Activated CD8-positive, alpha-beta T cell treated with anti-CD3 and anti-CD28 coated beads, Interleukin-2, amount 10 ng/mL, durations not matched to agents 7 days and 5 days (primary cell): ENCODE measurements at regions of chr1 and their contacts with region 1.

Region 1: DNA sequence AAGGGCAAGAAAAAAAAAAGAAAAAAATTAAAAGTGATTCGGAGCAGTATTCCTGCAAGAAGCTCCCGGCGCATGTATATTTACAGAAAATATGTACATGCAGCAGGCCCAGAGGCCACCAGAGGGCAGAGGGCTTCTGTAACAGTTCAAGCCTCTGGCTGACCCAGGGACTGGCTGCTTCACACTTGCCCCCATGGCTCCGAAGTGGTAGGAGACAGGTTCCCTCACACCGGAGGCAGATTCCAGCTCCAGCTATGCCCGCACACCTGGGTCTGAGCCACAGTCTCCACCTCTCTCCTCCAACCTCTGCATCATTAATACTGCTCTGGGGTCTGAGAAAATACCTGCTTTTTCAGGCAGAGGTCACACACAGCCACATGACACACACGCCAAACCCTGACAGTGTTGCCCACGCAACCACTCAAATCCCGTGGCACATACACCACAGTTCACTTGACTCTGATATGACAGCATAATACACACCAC is 2.2 kb upstream of the ARHGAP30 start:
- DNase-seq: peak; percentile 75
- ATAC-seq: no peak
- H3K4me3 Mint-ChIP-seq: no peak overlapping the region
- H3K27ac Mint-ChIP-seq: peak overlapping the region; percentile 26
- H3K4me1 Mint-ChIP-seq: peaks cover 60% of the 10 kb centered on the region
- H3K27me3 Mint-ChIP-seq: no peaks in the 10 kb centered on the region

Region 2: GRCh38 chr1:160997323-160998038 is 74.4 kb before region 1 on chr1:
- CTCF ChIA-PET with region 1: interaction called, 10 read pairs
- POLR2A ChIA-PET with region 1: no interaction called
- DNase-seq: peak; percentile 68
- ATAC-seq: peak; percentile 84
- H3K4me3 Mint-ChIP-seq: no peak overlapping the region
- H3K27ac Mint-ChIP-seq: no peak overlapping the region
- H3K4me1 Mint-ChIP-seq: no peaks in the 10 kb centered on the region
- H3K27me3 Mint-ChIP-seq: no peaks in the 10 kb centered on the region

Region 3: GRCh38 chr1:161021165-161021960 is 50.6 kb before region 1 on chr1:
- CTCF ChIA-PET with region 1: interaction called, 3 read pairs
- POLR2A ChIA-PET with region 1: interaction called, 12 read pairs
- DNase-seq: peak; percentile 90
- ATAC-seq: peak; percentile 95
- H3K4me3 Mint-ChIP-seq: peak overlapping the region; percentile 87
- H3K27ac Mint-ChIP-seq: peak overlapping the region; percentile 79
- H3K4me1 Mint-ChIP-seq: peaks cover 43% of the 10 kb centered on the region
- H3K27me3 Mint-ChIP-seq: peaks cover 2% of the 10 kb centered on the region

Region 4: GRCh38 chr1:161038523-161039153 is 33.3 kb before region 1 on chr1 and contains the start of gene TSTD1:
- CTCF ChIA-PET with region 1: interaction called, 114 read pairs
- POLR2A ChIA-PET with region 1: interaction called, 141 read pairs
- DNase-seq: peak; percentile 89
- ATAC-seq: peak; percentile 91
- H3K4me3 Mint-ChIP-seq: peak within 1 kb of the TSS; percentile 91
- H3K27ac Mint-ChIP-seq: peak within 1 kb of the TSS; percentile 94
- H3K4me1 Mint-ChIP-seq: peaks cover 63% of the 10 kb centered on the region
- H3K27me3 Mint-ChIP-seq: no peaks in the 10 kb centered on the region
- total RNA-seq, gene TSTD1: 63.2 to 63.3 TPM

Region 5: GRCh38 chr1:161092621-161093028 is 20.7 kb after region 1 on chr1:
- CTCF ChIA-PET with region 1: interaction called, 292 read pairs
- POLR2A ChIA-PET with region 1: interaction called, 86 read pairs
- DNase-seq: no peak
- ATAC-seq: peak; percentile 33
- H3K4me3 Mint-ChIP-seq: no peak overlapping the region
- H3K27ac Mint-ChIP-seq: peak overlapping the region; percentile 27
- H3K4me1 Mint-ChIP-seq: peaks cover 46% of the 10 kb centered on the region
- H3K27me3 Mint-ChIP-seq: peaks cover 2% of the 10 kb centered on the region

Region 6: GRCh38 chr1:161132410-161133219 is 60.7 kb after region 1 on chr1 and contains the start of gene DEDD:
- CTCF ChIA-PET with region 1: interaction called, 17 read pairs
- POLR2A ChIA-PET with region 1: interaction called, 8 read pairs
- DNase-seq: peak; percentile 93
- ATAC-seq: peak; percentile 96
- H3K4me3 Mint-ChIP-seq: no peak within 1 kb of the TSS
- H3K27ac Mint-ChIP-seq: no peak within 1 kb of the TSS
- H3K4me1 Mint-ChIP-seq: peaks cover 45% of the 10 kb centered on the region
- H3K27me3 Mint-ChIP-seq: no peaks in the 10 kb centered on the region
- total RNA-seq, gene DEDD: 34.5 to 36.3 TPM

Region 7: GRCh38 chr1:161139765-161140164 is 67.8 kb after region 1 on chr1:
- CTCF ChIA-PET with region 1: interaction called, 17 read pairs
- POLR2A ChIA-PET with region 1: interaction called, 6 read pairs
- DNase-seq: peak; percentile 64
- ATAC-seq: peak; percentile 70
- H3K4me3 Mint-ChIP-seq: no peak overlapping the region
- H3K27ac Mint-ChIP-seq: no peak overlapping the region
- H3K4me1 Mint-ChIP-seq: peaks cover 9% of the 10 kb centered on the region
- H3K27me3 Mint-ChIP-seq: no peaks in the 10 kb centered on the region